ENCODE measurements at regions of chr10 and their contacts with region 1.

Region 1: DNA sequence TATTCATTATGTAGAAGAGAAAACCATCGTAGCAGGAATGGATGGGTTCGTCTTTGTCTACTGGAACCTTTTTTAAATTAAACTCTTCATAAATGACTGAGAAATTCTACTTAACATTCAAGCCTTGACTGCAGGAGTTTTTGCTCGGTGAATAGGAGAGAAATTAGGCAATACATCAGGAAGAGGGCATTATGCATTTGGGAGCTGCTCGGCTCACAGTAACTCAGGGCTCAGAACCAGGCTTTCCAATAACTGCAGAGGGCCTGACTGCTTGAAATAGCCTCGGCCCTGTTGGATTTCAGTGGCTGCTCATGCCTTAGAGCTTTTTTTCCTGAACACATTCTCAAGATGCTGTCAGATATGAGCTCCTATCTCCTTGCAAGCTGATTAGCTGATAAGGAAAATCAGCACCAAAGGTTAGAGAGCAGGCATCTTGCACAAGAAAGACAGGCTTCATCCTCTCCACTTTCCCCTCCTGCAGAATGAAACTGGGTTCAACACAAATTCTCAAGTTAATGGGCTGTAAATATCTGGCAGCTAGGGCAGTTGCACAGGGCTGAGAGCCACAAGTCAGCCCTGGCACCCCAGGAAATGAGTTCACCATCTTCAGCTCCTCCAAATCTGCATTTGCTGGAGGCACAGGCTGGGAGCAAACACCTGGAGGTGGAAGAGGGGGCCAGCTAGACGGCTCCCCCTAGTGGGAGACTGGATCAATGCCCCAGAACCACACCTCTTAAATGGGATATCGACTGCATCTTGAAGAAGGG is 24.3 kb downstream of the TECTB start:
- DNase-seq: peak; percentile 53
- H3K4me3 Mint-ChIP-seq: no peak overlapping the region
- H3K27ac Mint-ChIP-seq: no peak overlapping the region
- H3K4me1 Mint-ChIP-seq: no peaks in the 10 kb centered on the region
- H3K27me3 Mint-ChIP-seq: peaks cover 18% of the 10 kb centered on the region

Region 2: DNA sequence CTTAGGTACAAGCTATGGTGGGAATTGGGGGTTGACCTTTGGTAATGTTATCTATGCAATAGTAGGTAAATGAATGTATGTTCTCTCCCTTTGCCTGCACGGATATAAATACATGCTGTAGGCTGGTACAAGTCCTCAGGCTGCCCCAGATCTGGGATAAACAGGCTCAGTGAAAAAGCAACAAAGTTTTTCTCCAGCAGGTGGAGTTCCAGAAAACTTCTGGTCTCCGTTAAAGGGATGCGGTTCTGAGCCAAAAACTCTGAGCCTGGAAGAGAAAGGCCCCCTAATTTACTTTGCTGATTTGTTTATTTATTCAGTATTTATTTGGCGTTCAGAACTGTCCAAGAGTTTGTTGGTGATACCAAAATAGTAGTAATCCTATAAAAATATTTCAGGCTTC is 1026.0 kb before region 1 on chr10:
- CTCF ChIA-PET with region 1: no interaction called
- intact Hi-C with region 1: no loop called
- DNase-seq: no peak
- H3K4me3 Mint-ChIP-seq: no peak overlapping the region
- H3K27ac Mint-ChIP-seq: no peak overlapping the region
- H3K4me1 Mint-ChIP-seq: no peaks in the 10 kb centered on the region
- H3K27me3 Mint-ChIP-seq: peaks cover 5% of the 10 kb centered on the region

Region 3: GRCh38 chr10:112227331-112227987 is 80.1 kb before region 1 on chr10:
- CTCF ChIA-PET with region 1: no interaction called
- intact Hi-C with region 1: no loop called
- DNase-seq: no peak
- H3K4me3 Mint-ChIP-seq: no peak overlapping the region
- H3K27ac Mint-ChIP-seq: no peak overlapping the region
- H3K4me1 Mint-ChIP-seq: no peaks in the 10 kb centered on the region
- H3K27me3 Mint-ChIP-seq: peaks cover 12% of the 10 kb centered on the region

Region 4: GRCh38 chr10:112261281-112261822 is 46.2 kb before region 1 on chr10:
- CTCF ChIA-PET with region 1: no interaction called
- intact Hi-C with region 1: no loop called
- DNase-seq: no peak
- H3K4me3 Mint-ChIP-seq: no peak overlapping the region
- H3K27ac Mint-ChIP-seq: no peak overlapping the region
- H3K4me1 Mint-ChIP-seq: no peaks in the 10 kb centered on the region
- H3K27me3 Mint-ChIP-seq: no peaks in the 10 kb centered on the region

Region 5: DNA sequence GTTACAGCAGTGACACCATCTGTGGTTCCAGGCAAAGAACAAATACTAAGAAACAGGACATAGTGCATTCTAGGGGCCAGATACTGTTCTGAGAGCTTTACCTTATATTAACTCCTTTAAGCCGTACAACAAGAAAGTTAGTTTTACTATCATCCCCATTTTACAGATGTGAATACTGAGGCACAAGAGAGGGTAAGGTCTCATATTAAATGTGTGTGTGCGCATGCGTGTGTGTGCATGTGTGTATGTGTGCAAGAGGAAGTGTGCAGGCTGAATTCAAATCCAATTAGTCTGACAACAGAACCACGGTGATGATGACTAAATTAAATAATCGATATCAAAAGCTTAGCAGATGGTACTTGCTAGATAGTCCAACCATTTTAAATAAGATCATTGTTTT is 13.4 kb before region 1 on chr10:
- CTCF ChIA-PET with region 1: interaction called, 15 read pairs
- intact Hi-C with region 1: no loop called
- DNase-seq: no peak
- H3K4me3 Mint-ChIP-seq: no peak overlapping the region
- H3K27ac Mint-ChIP-seq: no peak overlapping the region
- H3K4me1 Mint-ChIP-seq: no peaks in the 10 kb centered on the region
- H3K27me3 Mint-ChIP-seq: peaks cover 7% of the 10 kb centered on the region

Region 6: GRCh38 chr10:112389147-112389822 is 81.7 kb after region 1 on chr10:
- CTCF ChIA-PET with region 1: no interaction called
- intact Hi-C with region 1: no loop called
- DNase-seq: peak; percentile 90
- H3K4me3 Mint-ChIP-seq: peak overlapping the region; percentile 32
- H3K27ac Mint-ChIP-seq: peak overlapping the region; percentile 85
- H3K4me1 Mint-ChIP-seq: peaks cover 70% of the 10 kb centered on the region
- H3K27me3 Mint-ChIP-seq: no peaks in the 10 kb centered on the region

Measured in activated naive CD4-positive, alpha-beta T cell treated with anti-CD3 and anti-CD28 coated beads for 36 hours (primary cell).